ENCODE measurements at regions of chr3 and their contacts with region 1.

Region 1: DNA sequence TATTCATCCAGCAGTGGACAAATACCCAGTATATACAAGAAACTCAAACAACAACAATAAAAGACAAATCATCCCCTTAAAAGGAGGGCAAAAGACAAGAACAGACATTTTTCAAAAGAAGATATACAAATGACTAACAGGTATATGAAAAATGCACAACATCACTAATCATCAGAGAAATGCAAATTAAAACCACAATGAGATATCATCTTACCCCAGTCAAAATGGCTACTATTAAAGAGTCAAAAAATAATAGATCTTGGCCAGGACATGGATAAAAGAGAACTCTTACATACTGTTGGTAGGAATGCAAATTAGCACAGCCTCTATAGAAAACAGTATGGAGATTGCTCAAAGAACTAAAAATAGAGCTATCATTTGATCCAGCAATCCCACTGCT is 16.9 kb downstream of the DHX36 start:
- DNase-seq: no peak
- H3K4me3 Mint-ChIP-seq: no peak overlapping the region
- H3K27ac Mint-ChIP-seq: peak overlapping the region; percentile 40
- H3K4me1 Mint-ChIP-seq: peaks cover 12% of the 10 kb centered on the region
- H3K27me3 Mint-ChIP-seq: no peaks in the 10 kb centered on the region

Region 2: GRCh38 chr3:154323891-154324738 is 16.8 kb after region 1 on chr3 and contains the start of gene DHX36:
- intact Hi-C with region 1: loop called (anchors 2 kb)
- DNase-seq: peak; percentile 96
- H3K4me3 Mint-ChIP-seq: peak within 1 kb of the TSS; percentile 92
- H3K27ac Mint-ChIP-seq: peak within 1 kb of the TSS; percentile 98
- H3K4me1 Mint-ChIP-seq: peaks cover 26% of the 10 kb centered on the region
- H3K27me3 Mint-ChIP-seq: peaks cover 4% of the 10 kb centered on the region
- total RNA-seq, gene DHX36: 92.5 and 93.3 TPM in 2 replicates

Measured in activated CD4-positive, alpha-beta T cell treated with anti-CD3 and anti-CD28 coated beads, Interleukin-2, amount 10 ng/mL, durations not matched to agents 24 days and 14 days (primary cell).